CD4-positive, alpha-beta T cell (primary cell): ENCODE measurements at regions of chr14 and their contacts with region 1.

Region 1: GRCh38 chr14:105682940-105683570 is 156.7 kb downstream of the TMEM121 start:
- DNase-seq: no peak
- ATAC-seq: no peak
- H3K4me3 ChIP-seq: no peak overlapping the region
- H3K4me3 Mint-ChIP-seq: no peak overlapping the region
- H3K27ac ChIP-seq: no peak overlapping the region
- H3K27ac Mint-ChIP-seq: no peak overlapping the region
- H3K4me1 ChIP-seq: peaks cover 8% of the 10 kb centered on the region
- H3K4me1 Mint-ChIP-seq: no peaks in the 10 kb centered on the region
- H3K27me3 ChIP-seq: no peaks in the 10 kb centered on the region
- H3K27me3 Mint-ChIP-seq: no peaks in the 10 kb centered on the region
- CTCF ChIP-seq: no peak

Region 2: GRCh38 chr14:105577314-105577861 is 105.7 kb before region 1 on chr14:
- CTCF ChIA-PET with region 1: no interaction called
- POLR2A ChIA-PET with region 1: no interaction called
- intact Hi-C with region 1: no loop called
- DNase-seq: no peak
- ATAC-seq: no peak
- H3K4me3 ChIP-seq: no peak overlapping the region
- H3K4me3 Mint-ChIP-seq: no peak overlapping the region
- H3K27ac ChIP-seq: no peak overlapping the region
- H3K27ac Mint-ChIP-seq: no peak overlapping the region
- H3K4me1 ChIP-seq: no peaks in the 10 kb centered on the region
- H3K4me1 Mint-ChIP-seq: no peaks in the 10 kb centered on the region
- H3K27me3 ChIP-seq: no peaks in the 10 kb centered on the region
- H3K27me3 Mint-ChIP-seq: no peaks in the 10 kb centered on the region
- CTCF ChIP-seq: no peak

Region 3: DNA sequence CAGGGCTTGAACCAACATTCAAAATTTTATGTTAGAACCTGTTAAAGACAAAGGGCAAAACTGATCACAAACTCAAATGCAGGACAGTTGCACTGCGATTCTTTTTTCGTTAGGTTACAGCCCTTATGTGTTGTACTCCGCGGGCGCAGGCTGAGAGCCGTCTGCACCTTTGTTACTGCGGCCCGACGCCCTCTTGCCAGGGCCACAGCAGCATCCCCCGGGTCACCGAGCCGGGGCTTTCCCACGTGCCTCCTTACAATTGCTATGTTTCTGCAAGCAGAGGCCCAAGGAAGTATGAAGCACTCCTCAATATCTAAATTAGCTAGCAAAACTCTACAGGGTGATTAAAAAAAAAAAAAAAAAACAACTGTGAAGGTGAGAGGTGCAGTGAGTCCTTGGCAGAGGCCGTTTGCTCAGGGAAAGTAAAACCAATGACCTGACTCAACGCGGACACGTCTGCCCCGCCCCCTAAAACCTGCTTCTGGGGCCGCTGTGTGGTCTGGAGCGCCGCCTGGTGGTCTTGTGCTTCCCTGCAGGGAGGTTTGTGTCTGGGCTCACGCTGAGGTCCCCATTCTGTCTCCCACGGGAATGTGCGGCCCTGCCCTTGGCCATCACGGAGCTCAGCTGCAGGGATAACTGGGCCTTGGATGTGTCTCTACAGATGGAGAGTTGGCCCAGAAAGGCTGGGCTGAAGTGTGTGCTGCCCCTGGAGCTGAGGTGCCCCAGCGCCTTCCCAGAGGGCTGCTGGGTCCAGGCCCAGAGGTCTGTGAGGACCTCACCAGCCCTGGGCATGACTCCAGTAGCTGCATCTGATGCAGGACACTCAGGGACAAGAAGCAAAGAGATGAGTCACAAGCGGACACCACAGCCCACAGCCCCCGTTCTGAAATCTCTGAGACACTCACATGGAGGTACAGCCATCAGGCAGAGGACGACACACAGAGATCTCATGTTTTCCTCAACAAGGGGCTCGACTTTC is 261.9 kb after region 1 on chr14:
- CTCF ChIA-PET with region 1: no interaction called
- POLR2A ChIA-PET with region 1: no interaction called
- intact Hi-C with region 1: loop called in 1 of 2 experiments (anchors 5 kb)
- DNase-seq: peak; percentile 48 to 85 (median 69)
- ATAC-seq: peak; percentile 75
- H3K4me3 ChIP-seq: no peak overlapping the region
- H3K4me3 Mint-ChIP-seq: no peak overlapping the region
- H3K27ac ChIP-seq: no peak overlapping the region
- H3K27ac Mint-ChIP-seq: no peak overlapping the region
- H3K4me1 ChIP-seq: peaks cover 17% of the 10 kb centered on the region
- H3K4me1 Mint-ChIP-seq: peaks cover 12% of the 10 kb centered on the region
- H3K27me3 ChIP-seq: no peaks in the 10 kb centered on the region
- H3K27me3 Mint-ChIP-seq: peaks cover 5% of the 10 kb centered on the region
- CTCF ChIP-seq: peak; percentile 86

Region 4: DNA sequence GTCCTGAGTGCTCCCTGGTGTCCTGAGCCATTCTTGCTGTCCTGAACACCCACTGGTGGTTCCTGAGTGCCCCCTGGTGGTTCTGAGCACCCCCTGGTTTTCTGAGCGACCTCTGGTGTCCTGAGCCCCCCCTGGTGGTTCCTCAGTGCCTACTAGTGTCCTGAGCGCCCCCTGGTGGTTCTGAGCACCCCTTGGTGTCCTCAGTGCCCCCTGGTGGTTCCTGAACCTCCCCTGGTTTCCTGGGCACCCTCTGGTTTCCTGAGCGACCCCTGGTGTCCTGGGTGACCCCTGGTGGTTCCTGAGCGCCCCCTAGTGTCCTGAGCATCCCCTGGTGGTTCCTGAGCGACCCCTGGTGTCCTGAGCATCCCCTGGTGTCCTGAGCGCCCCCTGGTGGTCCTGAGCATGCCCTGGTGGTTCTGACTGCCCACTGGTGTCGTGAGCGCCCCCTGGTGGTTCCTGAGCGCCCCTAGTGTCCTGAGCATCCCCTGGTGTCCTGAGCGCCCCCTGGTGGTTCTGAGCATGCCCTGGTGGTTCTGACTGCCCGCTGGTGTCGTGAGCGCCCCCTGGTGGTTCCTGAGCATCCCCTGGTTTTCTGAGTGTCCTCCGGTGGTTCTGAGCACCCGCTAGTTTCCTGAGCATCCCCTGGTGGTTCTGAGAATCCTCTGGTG is 316.4 kb after region 1 on chr14:
- CTCF ChIA-PET with region 1: no interaction called
- POLR2A ChIA-PET with region 1: no interaction called
- intact Hi-C with region 1: loop called in 1 of 2 experiments (anchors 10 kb)
- DNase-seq: peak in 13 of 14 experiments; percentile 48 to 89 (median 76)
- ATAC-seq: peak; percentile 74
- H3K4me3 ChIP-seq: no peak overlapping the region
- H3K4me3 Mint-ChIP-seq: no peak overlapping the region
- H3K27ac ChIP-seq: no peak overlapping the region
- H3K27ac Mint-ChIP-seq: peak overlapping the region; percentile 33
- H3K4me1 ChIP-seq: peaks cover 24% of the 10 kb centered on the region
- H3K4me1 Mint-ChIP-seq: peaks cover 53% of the 10 kb centered on the region
- H3K27me3 ChIP-seq: no peaks in the 10 kb centered on the region
- H3K27me3 Mint-ChIP-seq: no peaks in the 10 kb centered on the region
- CTCF ChIP-seq: peak; percentile 52

Region 5: GRCh38 chr14:106044949-106045600 is 362.0 kb after region 1 on chr14:
- CTCF ChIA-PET with region 1: no interaction called
- POLR2A ChIA-PET with region 1: no interaction called
- intact Hi-C with region 1: loop called (anchors 10 kb)
- DNase-seq: peak; percentile 62 to 87 (median 75)
- ATAC-seq: peak; percentile 98
- H3K4me3 ChIP-seq: no peak overlapping the region
- H3K4me3 Mint-ChIP-seq: no peak overlapping the region
- H3K27ac ChIP-seq: no peak overlapping the region
- H3K27ac Mint-ChIP-seq: no peak overlapping the region
- H3K4me1 ChIP-seq: no peaks in the 10 kb centered on the region
- H3K4me1 Mint-ChIP-seq: peaks cover 3% of the 10 kb centered on the region
- H3K27me3 ChIP-seq: peaks cover 0 to 3% of the 10 kb centered on the region in 2 experiments
- H3K27me3 Mint-ChIP-seq: no peaks in the 10 kb centered on the region
- CTCF ChIP-seq: peak; percentile 79

Region 6: DNA sequence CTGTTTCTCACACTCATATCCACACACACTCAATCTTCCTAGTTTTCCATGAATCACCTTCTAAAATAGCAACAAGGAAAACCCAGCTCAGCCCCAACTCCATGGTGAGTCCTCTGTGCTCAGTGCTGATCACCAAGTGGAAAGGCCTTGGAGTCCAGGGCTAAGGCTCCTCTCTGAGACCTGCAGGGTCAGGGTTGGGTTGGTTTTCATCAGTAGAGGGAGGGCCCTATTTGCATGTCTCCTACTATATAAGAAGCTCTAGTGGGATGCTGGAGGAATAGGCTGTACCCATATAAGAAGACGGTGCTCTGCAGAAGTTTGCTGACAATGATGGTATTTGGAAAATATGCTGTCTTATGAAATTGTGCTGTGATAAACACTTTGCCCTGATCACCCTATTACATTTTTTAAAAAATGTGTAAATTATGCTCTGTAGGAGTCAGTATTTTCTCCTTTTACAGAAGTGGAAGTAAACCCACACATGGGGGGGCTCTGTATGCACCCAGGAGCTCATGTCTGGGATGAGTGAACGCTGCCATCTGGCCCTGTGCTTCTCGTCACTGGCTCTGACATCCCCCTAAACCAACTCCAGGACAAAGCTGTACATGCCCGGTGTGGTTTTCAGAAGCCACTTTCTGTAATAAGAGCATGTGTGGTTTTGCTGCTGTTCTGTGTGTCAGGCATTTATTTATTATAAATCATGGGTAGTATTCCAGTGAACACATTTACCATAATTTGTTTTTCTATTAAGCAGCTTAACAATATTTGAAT is 379.6 kb after region 1 on chr14:
- CTCF ChIA-PET with region 1: no interaction called
- POLR2A ChIA-PET with region 1: no interaction called
- intact Hi-C with region 1: loop called in 1 of 2 experiments (anchors 5 kb)
- DNase-seq: peak in 1 of 14 experiments; percentile 13
- ATAC-seq: no peak
- H3K4me3 ChIP-seq: no peak overlapping the region
- H3K4me3 Mint-ChIP-seq: no peak overlapping the region
- H3K27ac ChIP-seq: no peak overlapping the region
- H3K27ac Mint-ChIP-seq: no peak overlapping the region
- H3K4me1 ChIP-seq: peaks cover 17% of the 10 kb centered on the region
- H3K4me1 Mint-ChIP-seq: peaks cover 17% of the 10 kb centered on the region
- H3K27me3 ChIP-seq: peaks cover 3 to 4% of the 10 kb centered on the region in 2 experiments
- H3K27me3 Mint-ChIP-seq: peaks cover 12% of the 10 kb centered on the region
- CTCF ChIP-seq: no peak